ENCODE measurements at regions of chr10 and their contacts with region 1.

Region 1: GRCh38 chr10:61992671-61993668 is 91.5 kb downstream of the ARID5B start:
- DNase-seq: peak; percentile 84
- H3K4me3 Mint-ChIP-seq: peak overlapping the region; percentile 47
- H3K27ac Mint-ChIP-seq: peak overlapping the region; percentile 96
- H3K4me1 Mint-ChIP-seq: peaks cover 85% of the 10 kb centered on the region
- H3K27me3 Mint-ChIP-seq: no peaks in the 10 kb centered on the region

Region 2: DNA sequence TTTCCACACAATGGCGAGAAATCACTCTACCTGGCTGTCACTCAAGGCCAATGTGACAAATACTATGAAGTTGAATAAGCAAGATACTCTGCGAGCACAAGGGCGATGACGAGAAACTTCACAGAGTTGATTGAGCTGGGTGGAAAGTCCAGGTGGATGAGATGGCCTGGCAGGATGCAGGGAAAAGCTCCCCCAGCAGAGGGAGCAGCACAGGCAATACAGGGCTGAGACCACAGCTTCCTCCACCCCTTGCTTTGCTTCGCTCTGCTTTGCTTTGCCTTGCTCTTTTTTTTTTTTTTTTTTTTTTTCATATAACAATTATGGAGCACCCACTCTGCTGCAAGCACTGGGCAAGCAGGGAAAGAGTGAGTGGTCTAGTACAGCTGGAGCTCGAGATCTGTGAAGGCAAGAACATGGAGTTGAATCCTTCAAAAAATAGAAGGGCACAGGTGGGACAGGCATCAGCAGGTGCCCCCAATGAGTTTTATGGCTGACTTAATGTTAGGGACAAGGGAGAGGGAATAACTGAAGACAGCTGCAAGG is 242.0 kb before region 1 on chr10:
- CTCF ChIA-PET with region 1: no interaction called
- intact Hi-C with region 1: loop called (anchors 1 kb)
- DNase-seq: peak; percentile 85
- H3K4me3 Mint-ChIP-seq: no peak overlapping the region
- H3K27ac Mint-ChIP-seq: peak overlapping the region; percentile 14
- H3K4me1 Mint-ChIP-seq: peaks cover 38% of the 10 kb centered on the region
- H3K27me3 Mint-ChIP-seq: no peaks in the 10 kb centered on the region

Region 3: DNA sequence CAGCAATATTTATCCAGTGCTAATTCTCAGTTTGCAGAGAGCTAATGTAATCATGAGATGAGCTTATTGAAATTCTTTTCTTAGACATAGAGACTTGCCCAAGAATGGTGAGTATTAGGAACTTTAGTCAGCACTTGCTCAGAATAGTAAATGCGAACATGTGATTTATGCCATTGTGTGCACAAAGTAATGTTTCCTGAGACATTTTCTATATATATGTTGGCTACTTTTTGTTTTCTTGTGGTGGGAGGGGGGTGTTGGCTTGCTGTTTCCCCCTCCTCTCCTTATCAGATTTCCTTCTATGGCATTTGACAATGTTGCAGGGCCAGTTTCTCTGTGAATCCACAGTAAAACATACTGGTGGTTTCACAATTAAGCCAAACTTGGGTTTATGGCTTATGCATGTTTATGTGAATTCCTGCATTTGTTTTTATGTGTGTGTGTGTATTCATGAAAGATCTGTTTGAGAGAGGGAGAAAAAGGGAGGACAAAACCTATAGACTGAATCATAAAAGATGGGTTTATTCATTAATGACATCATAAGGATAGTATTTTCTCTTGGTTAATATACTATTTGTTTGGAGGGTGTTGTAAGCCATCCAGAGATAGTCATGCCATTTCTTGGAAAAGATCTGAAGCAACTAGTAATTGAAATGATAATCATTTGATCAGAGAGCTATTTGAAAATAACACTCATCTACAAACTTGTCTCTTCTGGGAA is 55.2 kb before region 1 on chr10:
- CTCF ChIA-PET with region 1: interaction called, 4 read pairs
- intact Hi-C with region 1: loop called (anchors 1 kb)
- DNase-seq: no peak
- H3K4me3 Mint-ChIP-seq: peak overlapping the region; percentile 40
- H3K27ac Mint-ChIP-seq: peak overlapping the region; percentile 93
- H3K4me1 Mint-ChIP-seq: peaks cover 92% of the 10 kb centered on the region
- H3K27me3 Mint-ChIP-seq: no peaks in the 10 kb centered on the region

Region 4: GRCh38 chr10:61964949-61965702 is 27.8 kb before region 1 on chr10:
- CTCF ChIA-PET with region 1: no interaction called
- intact Hi-C with region 1: loop called (anchors 1 kb)
- DNase-seq: no peak
- H3K4me3 Mint-ChIP-seq: no peak overlapping the region
- H3K27ac Mint-ChIP-seq: peak overlapping the region; percentile 87
- H3K4me1 Mint-ChIP-seq: peaks cover 90% of the 10 kb centered on the region
- H3K27me3 Mint-ChIP-seq: no peaks in the 10 kb centered on the region

Region 5: GRCh38 chr10:62038609-62039190 is 45.7 kb after region 1 on chr10:
- CTCF ChIA-PET with region 1: interaction called, 11 read pairs
- intact Hi-C with region 1: no loop called
- DNase-seq: peak; percentile 90
- H3K4me3 Mint-ChIP-seq: peak overlapping the region; percentile 14
- H3K27ac Mint-ChIP-seq: peak overlapping the region; percentile 91
- H3K4me1 Mint-ChIP-seq: peaks cover 85% of the 10 kb centered on the region
- H3K27me3 Mint-ChIP-seq: no peaks in the 10 kb centered on the region

Region 6: GRCh38 chr10:62224606-62225005 is 231.6 kb after region 1 on chr10:
- CTCF ChIA-PET with region 1: no interaction called
- intact Hi-C with region 1: loop called (anchors 1 kb)
- DNase-seq: no peak
- H3K4me3 Mint-ChIP-seq: no peak overlapping the region
- H3K27ac Mint-ChIP-seq: peak overlapping the region; percentile 86
- H3K4me1 Mint-ChIP-seq: peaks cover 10% of the 10 kb centered on the region
- H3K27me3 Mint-ChIP-seq: no peaks in the 10 kb centered on the region

Region 7: DNA sequence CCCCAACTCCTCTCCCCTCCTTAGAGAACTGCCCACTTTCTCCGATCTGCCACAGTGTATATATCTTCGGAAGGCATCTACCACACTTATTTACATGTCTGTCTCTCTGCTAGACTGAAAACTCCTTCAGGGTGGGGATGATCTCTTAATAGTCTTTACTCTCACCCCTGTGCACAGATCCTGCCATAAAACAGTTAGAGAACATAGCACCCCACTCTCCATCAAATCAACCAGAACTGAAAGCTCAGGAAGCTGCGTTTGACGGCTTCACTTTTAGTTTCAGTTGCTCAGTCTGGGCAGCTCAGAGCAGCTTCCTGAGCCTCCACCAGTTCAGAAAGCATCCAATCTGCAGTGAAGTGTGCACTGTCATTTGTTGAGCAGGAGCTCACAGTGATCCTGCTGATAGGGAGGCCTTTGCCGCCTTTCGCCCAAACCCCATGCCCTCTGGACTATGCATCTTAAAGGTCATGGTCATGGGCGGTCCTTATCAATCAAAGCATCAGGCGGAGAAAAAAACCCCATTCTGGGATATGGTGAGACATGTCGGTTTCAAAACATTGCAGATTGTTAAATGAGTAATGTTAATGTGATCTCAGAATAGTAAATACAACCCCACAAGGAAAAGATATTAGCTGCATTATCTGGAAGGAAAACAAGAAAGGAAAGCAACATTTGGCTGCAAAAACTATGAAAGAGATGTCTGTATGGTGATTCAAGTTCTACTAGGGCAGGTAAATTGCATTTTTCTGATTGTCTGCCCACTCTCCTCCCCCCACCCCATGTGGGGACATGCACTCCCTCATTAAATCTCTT is 644.5 kb after region 1 on chr10:
- CTCF ChIA-PET with region 1: no interaction called
- intact Hi-C with region 1: loop called (anchors 2 kb)
- DNase-seq: peak; percentile 81
- H3K4me3 Mint-ChIP-seq: no peak overlapping the region
- H3K27ac Mint-ChIP-seq: no peak overlapping the region
- H3K4me1 Mint-ChIP-seq: peaks cover 14% of the 10 kb centered on the region
- H3K27me3 Mint-ChIP-seq: no peaks in the 10 kb centered on the region